ENCODE measurements at regions of chr3 and their contacts with region 1.

Region 1: GRCh38 chr3:194003125-194004057 is 132.6 kb upstream of the HES1 start:
- DNase-seq: peak; percentile 93
- ATAC-seq: peak; percentile 91 to 94

Region 2: DNA sequence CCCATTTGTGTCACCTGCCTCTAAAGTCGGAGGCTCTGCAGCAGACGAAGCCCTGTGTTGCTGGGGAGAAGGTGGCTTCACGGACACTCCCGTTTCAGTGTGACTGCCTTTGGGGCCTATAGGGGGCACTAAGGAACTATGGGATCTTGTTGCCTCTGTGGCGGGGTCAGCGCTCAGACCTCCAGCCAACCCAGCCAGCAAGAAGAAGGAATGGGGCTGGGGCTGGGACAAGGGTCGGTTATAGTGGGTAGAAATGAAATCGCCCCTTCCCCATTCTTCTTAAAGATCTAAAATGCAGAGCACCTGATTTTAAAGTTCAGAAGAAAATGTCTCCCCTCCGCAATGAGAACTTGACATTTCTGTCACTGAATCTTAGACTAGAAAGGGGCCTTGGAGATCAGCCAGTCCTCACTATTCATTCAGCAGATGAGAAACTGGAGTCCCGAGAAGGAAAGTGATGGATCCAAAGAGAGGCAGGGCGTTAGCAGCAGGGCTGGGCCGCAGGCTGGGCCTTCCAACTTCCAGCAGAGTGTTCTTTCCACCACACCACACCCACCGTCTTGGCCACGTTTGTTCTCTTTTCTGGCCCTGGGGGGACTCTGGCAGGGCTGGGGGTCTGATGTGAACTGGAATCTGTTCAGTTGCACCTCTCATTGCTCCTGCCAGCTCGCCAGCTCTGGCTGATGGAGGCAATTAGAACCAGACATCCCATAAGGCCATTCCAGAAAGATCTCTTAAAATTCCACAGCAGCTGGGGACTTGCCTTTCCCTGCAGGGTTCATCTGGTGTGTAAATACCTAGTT is 215.0 kb before region 1 on chr3:
- intact Hi-C with region 1: loop called (anchors 5 to 10 kb)
- DNase-seq: peak; percentile 67
- ATAC-seq: peak; percentile 88 to 95

Region 3: GRCh38 chr3:194070634-194071409 is 67.4 kb after region 1 on chr3:
- intact Hi-C with region 1: loop called in 1 of 2 experiments (anchors 5 kb)
- DNase-seq: peak; percentile 91
- ATAC-seq: peak; percentile 91 to 92

Measured in left cardiac atrium (tissue), 4 donors.